ENCODE measurements at regions of chr3 and their contacts with region 1.

Region 1: DNA sequence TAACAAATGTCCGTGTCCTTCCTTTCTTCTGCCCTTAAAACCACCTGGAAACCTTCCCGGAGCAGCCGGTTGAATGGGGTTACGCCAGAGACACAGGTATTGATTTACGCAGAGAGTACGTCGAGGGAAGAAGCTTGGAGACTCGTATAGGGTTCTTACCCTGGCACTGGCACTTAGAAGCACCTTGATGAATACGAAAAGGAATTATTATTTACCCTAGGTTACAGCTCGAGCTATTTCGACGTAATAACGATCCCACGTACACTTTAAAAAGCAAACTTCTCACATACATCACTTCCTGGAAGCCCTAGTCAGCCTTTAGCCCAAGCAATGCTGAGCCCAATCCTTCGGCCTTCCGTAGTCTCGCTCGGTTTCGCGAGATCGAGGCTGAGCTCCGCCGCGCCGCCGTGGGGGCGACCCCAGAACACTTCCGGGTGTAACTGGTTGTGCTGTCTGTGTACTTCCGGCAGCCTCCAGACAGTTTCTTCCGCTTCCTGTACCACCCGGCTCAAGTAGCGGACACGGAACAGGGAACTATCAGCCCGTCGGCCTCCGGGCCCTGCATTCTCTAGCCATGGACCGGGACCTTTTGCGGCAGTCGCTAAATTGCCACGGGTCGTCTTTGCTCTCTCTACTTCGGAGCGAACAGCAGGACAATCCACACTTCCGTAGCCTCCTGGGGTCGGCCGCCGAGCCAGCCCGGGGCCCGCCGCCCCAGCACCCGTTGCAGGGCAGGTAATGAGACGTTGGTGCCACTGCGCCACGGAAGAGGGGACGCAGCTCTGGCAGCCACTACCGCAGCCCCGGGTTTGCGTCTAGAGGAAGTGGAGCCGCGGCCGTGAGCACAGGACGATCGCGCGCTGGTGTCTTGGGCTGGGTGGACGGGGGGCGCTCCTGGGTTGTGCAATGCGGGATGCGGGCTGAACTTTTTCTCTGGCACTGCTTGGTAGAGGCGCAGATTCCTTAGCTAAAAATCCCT is at the start of gene TTC14:
- DNase-seq: peak; percentile 97
- total RNA-seq, gene TTC14: 42.9 to 43.3 TPM

Region 2: DNA sequence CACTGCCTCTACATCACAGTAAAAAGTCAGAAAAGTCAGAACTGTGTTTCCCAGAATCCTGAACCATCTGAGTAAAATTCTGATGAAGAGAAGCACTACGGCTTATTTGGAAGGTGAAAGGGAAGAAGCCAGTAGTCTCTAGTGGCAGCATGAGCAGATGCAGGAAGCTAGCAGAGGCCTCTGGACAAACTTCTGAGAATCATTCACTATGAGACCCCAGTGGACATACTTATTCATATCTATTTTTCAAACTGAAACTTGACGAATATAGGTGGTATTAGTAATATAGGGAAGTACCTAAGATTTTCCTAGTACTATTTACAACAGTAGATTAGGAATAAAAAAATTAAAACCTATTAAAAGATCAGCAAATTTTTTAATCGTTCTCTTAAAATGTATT is 272.8 kb before region 1 on chr3:
- intact Hi-C with region 1: no loop called
- DNase-seq: no peak

Region 3: DNA sequence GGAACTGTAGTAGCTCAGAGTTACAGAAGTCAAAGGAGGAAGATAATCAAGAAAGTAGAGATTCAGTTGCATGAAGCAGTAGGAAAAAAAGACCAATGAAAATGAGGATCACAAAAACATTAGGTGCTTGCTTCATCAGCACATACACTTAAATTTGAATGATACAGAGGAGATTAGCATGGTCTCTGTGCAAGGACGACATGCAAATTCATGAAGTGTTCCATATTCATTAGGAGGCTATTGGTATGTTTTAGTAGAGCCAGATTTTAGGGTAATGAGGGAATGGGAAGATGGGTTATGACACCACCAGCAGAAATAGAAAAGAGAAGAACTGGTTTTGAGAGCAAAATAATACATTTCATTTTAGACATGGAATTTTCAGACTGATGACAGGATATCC is 21.0 kb before region 1 on chr3:
- intact Hi-C with region 1: no loop called
- DNase-seq: no peak

Region 4: GRCh38 chr3:180834614-180835013 is 232.6 kb after region 1 on chr3:
- intact Hi-C with region 1: no loop called
- DNase-seq: no peak

Region 5: DNA sequence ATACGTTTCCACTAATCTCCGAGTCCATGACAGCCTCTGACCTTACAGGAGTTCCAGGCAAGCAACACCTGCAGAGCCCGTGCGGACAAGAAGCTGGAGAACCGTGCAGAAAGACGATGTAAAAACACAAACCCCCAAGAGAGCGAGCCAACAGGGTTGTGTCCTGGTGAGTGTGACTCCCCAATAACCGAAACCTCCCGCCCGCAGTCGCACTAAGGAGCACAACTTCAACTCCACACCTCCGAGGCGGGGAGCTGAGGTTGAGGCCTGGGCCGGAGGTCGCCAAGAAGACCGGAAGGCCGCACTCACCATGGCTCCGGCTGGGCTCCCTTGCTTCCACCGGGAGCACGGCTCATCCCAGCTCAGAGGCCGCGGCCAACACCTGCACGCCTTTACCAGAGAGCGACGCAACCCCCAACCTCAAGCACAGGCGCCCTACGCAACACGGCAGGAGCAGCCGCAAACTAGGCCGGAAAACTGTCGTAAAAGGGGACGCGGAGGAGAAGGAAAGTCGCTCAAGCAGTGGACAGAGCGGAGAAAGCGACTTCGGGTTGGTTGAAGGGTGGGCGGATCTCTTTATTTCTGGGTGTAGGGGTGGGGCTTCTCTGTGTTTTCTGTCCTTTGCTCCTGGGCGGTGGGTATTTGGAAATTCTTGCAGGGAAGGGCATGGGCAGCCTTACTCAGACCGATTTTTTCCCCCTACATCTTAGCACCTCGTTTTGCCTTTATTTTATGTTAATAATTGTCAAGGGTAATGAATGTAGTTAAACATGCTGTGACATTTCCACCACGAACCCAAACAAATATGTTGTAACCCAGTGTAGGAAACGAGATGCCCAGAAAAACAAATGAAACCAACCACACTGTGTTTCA is 387.6 kb after region 1 on chr3 and contains the start of gene DNAJC19:
- intact Hi-C with region 1: loop called in 1 of 2 experiments (anchors 10 kb)
- DNase-seq: peak; percentile 96
- total RNA-seq, gene DNAJC19: 34.5 to 45.5 TPM

Measured in posterior vena cava (tissue), 2 donors.